Natural killer cell (primary cell): ENCODE measurements at regions of chr17 and their contacts with region 1.

Region 1: DNA sequence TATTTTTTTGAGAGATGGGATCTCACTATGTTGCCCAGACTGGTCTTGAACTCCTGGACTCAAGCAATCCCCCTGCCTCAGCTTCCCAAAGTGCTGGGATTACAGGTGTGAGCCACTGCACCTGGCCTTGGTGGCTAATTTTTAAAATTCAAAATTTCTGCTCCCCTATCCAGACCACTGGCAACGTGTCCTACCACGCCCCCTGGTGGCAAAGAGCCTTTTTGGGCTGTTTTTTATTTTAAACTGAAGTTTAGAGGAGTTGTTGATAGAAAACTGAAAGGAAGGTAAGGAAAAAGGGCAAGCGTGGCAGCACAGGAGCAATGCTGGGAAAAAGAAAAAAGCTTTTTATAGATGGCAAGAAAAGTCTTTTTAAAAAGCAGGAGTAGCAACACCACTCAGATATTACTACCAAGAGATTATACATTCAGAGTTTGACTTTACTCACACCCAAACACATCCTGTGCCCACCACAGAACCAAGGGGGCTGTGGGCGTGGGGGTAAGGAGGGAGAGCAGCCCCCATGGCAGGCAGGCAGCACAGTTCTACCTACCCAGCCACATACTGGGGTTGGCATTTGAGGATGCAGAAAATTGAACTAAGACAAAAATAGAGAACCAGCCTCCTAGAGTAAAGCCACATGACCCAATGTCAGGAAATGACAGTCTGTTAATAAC is 4.2 kb upstream of the MXRA7 start:
- DNase-seq: peak; percentile 68 to 85
- ATAC-seq: no peak
- H3K4me3 ChIP-seq: no peak overlapping the region
- H3K4me3 Mint-ChIP-seq: peak overlapping the region; percentile 89
- H3K27ac ChIP-seq: peak overlapping the region; percentile 86
- H3K27ac Mint-ChIP-seq: peak overlapping the region; percentile 94 to 99
- H3K4me1 ChIP-seq: peaks cover 40% of the 10 kb centered on the region
- H3K4me1 Mint-ChIP-seq: peaks cover 23 to 47% of the 10 kb centered on the region in 2 donors
- H3K27me3 ChIP-seq: no peaks in the 10 kb centered on the region
- H3K27me3 Mint-ChIP-seq: no peaks in the 10 kb centered on the region
- CTCF ChIP-seq: peak; percentile 93

Region 2: DNA sequence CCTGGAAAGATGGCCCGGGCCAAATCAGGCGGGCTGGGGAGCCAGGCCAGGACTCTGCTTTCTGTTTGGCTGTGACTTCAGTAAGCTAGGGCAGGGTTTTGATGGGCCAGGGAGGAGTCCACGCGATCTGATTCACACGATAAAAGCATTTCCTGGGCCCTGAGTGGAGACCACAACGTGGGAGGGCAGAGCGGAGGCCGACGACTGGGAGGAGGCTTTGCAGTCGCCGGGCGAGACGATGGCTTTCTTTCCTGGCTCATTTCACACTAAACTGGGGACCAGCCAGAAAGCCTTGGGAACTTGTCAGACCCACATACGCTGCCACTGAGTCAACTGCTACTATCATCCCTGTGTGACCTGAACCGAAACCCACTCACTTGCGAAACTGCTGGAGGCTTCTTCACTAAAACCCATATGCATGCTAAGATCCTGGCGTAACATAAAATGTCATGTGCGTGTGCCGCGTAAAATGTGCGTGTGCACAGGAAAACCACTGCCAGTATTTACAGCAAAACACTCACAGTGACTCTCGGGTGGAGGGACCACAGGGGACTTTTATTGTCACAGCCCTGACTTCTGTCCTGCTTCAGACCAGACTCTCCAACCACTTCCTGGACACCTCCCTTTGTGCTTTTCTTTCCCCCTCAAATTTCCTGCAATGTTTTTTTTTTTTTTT is 199.5 kb before region 1 on chr17:
- intact Hi-C with region 1: loop called (anchors 1 kb)
- DNase-seq: peak; percentile 80 to 97
- ATAC-seq: peak; percentile 79 to 89 (median 81)
- H3K4me3 ChIP-seq: peak overlapping the region; percentile 31
- H3K4me3 Mint-ChIP-seq: peak overlapping the region; percentile 77
- H3K27ac ChIP-seq: peak overlapping the region; percentile 86
- H3K27ac Mint-ChIP-seq: peak overlapping the region; percentile 92 to 96
- H3K4me1 ChIP-seq: peaks cover 82% of the 10 kb centered on the region
- H3K4me1 Mint-ChIP-seq: peaks cover 43 to 60% of the 10 kb centered on the region in 2 donors
- H3K27me3 ChIP-seq: no peaks in the 10 kb centered on the region
- H3K27me3 Mint-ChIP-seq: no peaks in the 10 kb centered on the region
- CTCF ChIP-seq: no peak

Region 3: GRCh38 chr17:76523084-76524037 is 191.6 kb before region 1 on chr17:
- intact Hi-C with region 1: loop called (anchors 1 kb)
- DNase-seq: peak; percentile 80 to 92
- ATAC-seq: peak; percentile 74 to 84 (median 79)
- H3K4me3 ChIP-seq: no peak overlapping the region
- H3K4me3 Mint-ChIP-seq: peak overlapping the region; percentile 35
- H3K27ac ChIP-seq: no peak overlapping the region
- H3K27ac Mint-ChIP-seq: peak overlapping the region in 1 of 2 donors; percentile 70
- H3K4me1 ChIP-seq: peaks cover 32% of the 10 kb centered on the region
- H3K4me1 Mint-ChIP-seq: peaks cover 25 to 44% of the 10 kb centered on the region in 2 donors
- H3K27me3 ChIP-seq: no peaks in the 10 kb centered on the region
- H3K27me3 Mint-ChIP-seq: no peaks in the 10 kb centered on the region
- CTCF ChIP-seq: peak; percentile 100

Region 4: GRCh38 chr17:76557368-76558197 is 157.4 kb before region 1 on chr17:
- intact Hi-C with region 1: loop called (anchors 5 kb)
- DNase-seq: peak; percentile 86 to 97
- ATAC-seq: peak; percentile 83 to 91 (median 85)
- H3K4me3 ChIP-seq: peak overlapping the region; percentile 72
- H3K4me3 Mint-ChIP-seq: peak overlapping the region; percentile 100
- H3K27ac ChIP-seq: peak overlapping the region; percentile 94
- H3K27ac Mint-ChIP-seq: peak overlapping the region; percentile 100
- H3K4me1 ChIP-seq: peaks cover 34% of the 10 kb centered on the region
- H3K4me1 Mint-ChIP-seq: peaks cover 32 to 34% of the 10 kb centered on the region in 2 donors
- H3K27me3 ChIP-seq: no peaks in the 10 kb centered on the region
- H3K27me3 Mint-ChIP-seq: no peaks in the 10 kb centered on the region
- CTCF ChIP-seq: no peak

Region 5: GRCh38 chr17:76681222-76682137 is 33.5 kb before region 1 on chr17:
- intact Hi-C with region 1: loop called (anchors 5 kb)
- DNase-seq: peak; percentile 56 to 86
- ATAC-seq: peak; percentile 63 to 72 (median 70)
- H3K4me3 ChIP-seq: no peak overlapping the region
- H3K4me3 Mint-ChIP-seq: peak overlapping the region; percentile 85
- H3K27ac ChIP-seq: peak overlapping the region; percentile 39
- H3K27ac Mint-ChIP-seq: peak overlapping the region; percentile 66 to 82
- H3K4me1 ChIP-seq: peaks cover 61% of the 10 kb centered on the region
- H3K4me1 Mint-ChIP-seq: peaks cover 18 to 21% of the 10 kb centered on the region in 2 donors
- H3K27me3 ChIP-seq: no peaks in the 10 kb centered on the region
- H3K27me3 Mint-ChIP-seq: no peaks in the 10 kb centered on the region
- CTCF ChIP-seq: peak; percentile 52

Region 6: GRCh38 chr17:76726231-76726775 is 11.3 kb after region 1 on chr17 and contains the start of gene JMJD6:
- intact Hi-C with region 1: loop called (anchors 1 kb)
- DNase-seq: no peak
- ATAC-seq: peak in 1 of 3 donors; percentile 71
- H3K4me3 ChIP-seq: peak within 1 kb of the TSS; percentile 94
- H3K4me3 Mint-ChIP-seq: peak within 1 kb of the TSS; percentile 98
- H3K27ac ChIP-seq: peak within 1 kb of the TSS; percentile 90
- H3K27ac Mint-ChIP-seq: peak within 1 kb of the TSS; percentile 94 to 100
- H3K4me1 ChIP-seq: peaks cover 49% of the 10 kb centered on the region
- H3K4me1 Mint-ChIP-seq: peaks cover 29 to 33% of the 10 kb centered on the region in 2 donors
- H3K27me3 ChIP-seq: no peaks in the 10 kb centered on the region
- H3K27me3 Mint-ChIP-seq: no peaks in the 10 kb centered on the region
- CTCF ChIP-seq: no peak
- total RNA-seq, gene JMJD6: 169 to 257 (median 195) TPM

Region 7: DNA sequence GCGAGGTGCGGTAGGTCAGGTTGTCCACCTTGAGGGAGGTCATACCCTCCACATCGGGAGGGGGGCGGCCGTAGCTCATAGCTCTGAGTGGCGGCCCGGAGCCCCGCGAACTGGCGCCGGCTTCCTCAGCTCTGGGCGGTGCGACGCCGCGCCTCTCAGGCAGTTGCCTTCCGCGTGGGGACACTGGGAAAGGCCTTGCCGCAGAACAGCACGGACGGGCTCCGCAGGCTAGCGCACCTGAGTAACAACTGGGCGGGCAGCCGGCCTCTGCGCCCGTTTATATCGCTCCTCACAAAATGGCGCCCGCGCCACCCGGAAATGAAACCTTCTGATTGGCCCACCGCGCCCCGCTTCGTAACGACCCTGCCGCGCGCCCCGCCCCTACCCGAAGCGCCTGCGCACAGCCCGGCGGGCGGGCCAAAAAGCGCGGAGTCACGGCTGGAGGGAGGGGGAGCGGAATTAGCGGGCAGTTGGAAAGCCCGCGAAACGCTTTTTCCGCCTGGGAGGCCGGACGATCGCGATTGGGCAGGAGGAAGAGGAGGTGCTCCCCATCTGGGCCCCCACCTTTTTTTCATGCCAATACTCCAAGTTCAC is 22.2 kb after region 1 on chr17 and contains the start of gene SRSF2:
- intact Hi-C with region 1: loop called (anchors 1 kb)
- DNase-seq: peak; percentile 98 to 100
- ATAC-seq: peak; percentile 73 to 89 (median 75)
- H3K4me3 ChIP-seq: peak within 1 kb of the TSS; percentile 81
- H3K4me3 Mint-ChIP-seq: peak within 1 kb of the TSS; percentile 96
- H3K27ac ChIP-seq: peak within 1 kb of the TSS; percentile 98
- H3K27ac Mint-ChIP-seq: peak within 1 kb of the TSS; percentile 99 to 100
- H3K4me1 ChIP-seq: peaks cover 26% of the 10 kb centered on the region
- H3K4me1 Mint-ChIP-seq: peaks cover 53 to 59% of the 10 kb centered on the region in 2 donors
- H3K27me3 ChIP-seq: no peaks in the 10 kb centered on the region
- H3K27me3 Mint-ChIP-seq: no peaks in the 10 kb centered on the region
- CTCF ChIP-seq: no peak
- total RNA-seq, gene SRSF2: 402 to 548 (median 503) TPM

Region 8: DNA sequence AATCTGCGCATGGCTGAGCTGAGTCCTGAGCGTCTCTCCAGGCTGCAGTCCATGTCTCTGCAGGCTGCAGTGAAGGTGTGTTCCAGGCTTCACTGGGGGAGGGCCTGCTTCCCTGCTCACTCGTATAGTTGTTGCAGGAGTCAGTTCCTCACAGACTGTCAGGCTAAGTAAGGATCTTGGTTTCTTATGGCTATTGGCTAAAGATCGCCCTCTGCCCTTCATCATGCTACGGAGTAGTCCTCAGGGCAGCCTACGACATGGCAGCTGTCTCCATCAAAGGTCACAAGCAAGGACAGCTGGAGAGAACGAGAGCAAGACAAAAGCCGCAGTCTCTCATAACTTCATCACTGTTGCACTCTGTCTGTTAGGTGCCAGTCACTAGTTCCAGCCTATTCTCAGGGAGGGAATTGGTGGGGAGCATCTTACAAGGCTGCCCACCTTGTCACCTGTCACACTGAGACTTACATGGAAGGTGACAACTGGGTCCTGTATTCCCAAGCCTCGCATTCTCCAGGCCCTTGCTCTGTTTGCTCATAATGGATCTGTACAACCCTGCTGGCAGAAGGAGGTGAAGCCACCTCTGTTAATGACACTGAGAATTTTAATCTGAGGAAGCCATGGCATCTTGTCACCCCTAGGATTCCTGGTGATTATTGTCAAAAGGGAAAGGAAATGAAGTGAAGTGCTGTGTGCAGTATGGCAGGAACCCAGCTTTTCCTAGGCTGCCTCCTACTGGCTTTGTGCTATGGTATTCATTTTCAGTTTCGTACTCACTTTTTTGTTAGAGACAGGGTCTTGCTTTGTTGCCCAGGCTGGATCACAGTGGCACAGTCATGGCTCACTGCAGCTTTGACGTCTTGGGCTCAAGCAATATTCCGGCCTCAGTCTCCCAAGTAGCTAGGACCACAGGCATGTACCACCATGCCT is 66.4 kb after region 1 on chr17:
- intact Hi-C with region 1: no loop called
- DNase-seq: peak in 1 of 2 donors; percentile 47
- ATAC-seq: no peak
- H3K4me3 ChIP-seq: no peak overlapping the region
- H3K4me3 Mint-ChIP-seq: no peak overlapping the region
- H3K27ac ChIP-seq: no peak overlapping the region
- H3K27ac Mint-ChIP-seq: no peak overlapping the region
- H3K4me1 ChIP-seq: no peaks in the 10 kb centered on the region
- H3K4me1 Mint-ChIP-seq: no peaks in the 10 kb centered on the region
- H3K27me3 ChIP-seq: no peaks in the 10 kb centered on the region
- H3K27me3 Mint-ChIP-seq: no peaks in the 10 kb centered on the region
- CTCF ChIP-seq: no peak